SK-N-SH (cell line): ENCODE measurements at regions of chr2 and their contacts with region 1.

Region 1: DNA sequence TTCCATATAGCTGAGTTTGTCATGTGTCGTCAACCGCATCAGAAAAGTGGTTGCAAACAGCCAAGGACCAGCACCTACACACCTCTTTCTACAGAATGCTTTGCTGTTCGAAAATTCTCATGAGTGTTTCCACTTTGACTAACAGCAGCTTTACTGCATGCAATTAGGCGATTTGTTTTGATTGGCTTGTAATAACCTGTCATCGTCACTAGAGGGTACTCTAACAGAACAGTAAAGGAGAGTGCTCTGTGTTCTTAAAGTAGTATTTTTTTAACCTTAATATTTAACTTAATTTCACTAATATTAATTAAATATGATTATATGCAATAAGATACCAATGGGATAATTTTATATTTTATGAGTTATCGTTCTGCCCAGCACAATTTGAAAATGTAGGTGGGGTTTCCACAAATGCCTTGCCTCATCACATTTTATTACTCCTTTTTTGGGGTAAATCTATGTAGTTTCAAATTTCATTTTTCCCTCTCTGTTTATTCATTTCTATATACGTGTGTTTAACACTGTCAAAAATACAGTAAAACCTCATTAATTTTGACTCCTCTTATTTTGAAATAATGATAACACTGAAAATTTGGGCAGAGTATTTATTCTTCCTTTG is 502.2 kb downstream of the NRXN1 start:
- DNase-seq: peak; percentile 19
- H3K4me3 ChIP-seq: no peak overlapping the region; a peak in 1 of 4 replicates
- H3K27ac ChIP-seq: no peak overlapping the region
- H3K4me1 ChIP-seq: peaks cover 0 to 3% of the 10 kb centered on the region in 2 experiments; a peak in 2 of 4 replicates
- H3K27me3 ChIP-seq: no peaks in the 10 kb centered on the region
- CTCF ChIP-seq: peak; percentile 72
- EP300 ChIP-seq: no peak
- RAD21 ChIP-seq: peak; percentile 78

Region 2: DNA sequence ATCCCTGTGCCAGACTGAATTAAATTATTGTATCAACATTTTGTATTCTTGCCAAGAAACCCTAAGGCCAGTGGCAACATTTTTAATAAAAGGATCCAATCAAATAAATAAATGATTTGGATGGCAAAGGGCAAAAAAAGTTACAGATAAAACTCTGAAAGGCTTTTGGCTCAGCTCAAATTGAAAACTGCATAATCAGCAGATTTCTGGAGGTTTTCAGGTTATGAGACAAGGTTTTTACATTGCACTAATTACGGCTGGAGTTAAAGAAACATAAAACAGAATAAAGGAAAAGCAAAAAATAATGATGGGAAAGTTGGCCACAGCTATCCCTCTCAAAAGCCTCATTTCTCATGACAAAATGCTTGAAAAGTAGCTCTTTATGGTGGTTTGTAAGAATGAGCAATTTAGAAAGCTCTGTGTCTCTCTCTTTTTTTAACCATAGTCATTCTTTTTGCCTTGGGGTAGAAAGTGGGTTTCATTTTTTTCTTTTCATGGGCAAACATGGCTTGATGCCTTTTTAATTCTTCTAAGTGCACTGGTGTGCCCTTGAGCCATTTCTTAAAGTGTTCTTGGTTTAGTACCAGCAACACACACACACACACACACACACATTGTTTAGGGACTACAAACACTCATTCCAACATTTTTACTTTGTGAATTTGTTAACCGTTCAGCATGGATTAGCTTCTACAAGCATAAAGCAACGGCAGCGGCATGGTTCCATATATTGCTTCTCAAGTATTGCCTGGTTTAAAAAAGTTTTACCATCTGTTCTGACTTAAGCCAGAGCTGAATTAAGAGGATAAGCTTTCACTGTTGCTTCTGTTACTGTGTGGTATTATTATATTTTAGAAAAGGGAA is 628.3 kb before region 1 on chr2:
- CTCF ChIA-PET with region 1: no interaction called
- POLR2A ChIA-PET with region 1: no interaction called
- DNase-seq: no peak
- H3K4me3 ChIP-seq: no peak overlapping the region
- H3K27ac ChIP-seq: no peak overlapping the region
- H3K4me1 ChIP-seq: no peaks in the 10 kb centered on the region
- H3K27me3 ChIP-seq: no peaks in the 10 kb centered on the region
- CTCF ChIP-seq: no peak
- EP300 ChIP-seq: no peak
- RAD21 ChIP-seq: no peak

Region 3: GRCh38 chr2:51795248-51795888 is 1265.7 kb after region 1 on chr2:
- CTCF ChIA-PET with region 1: interaction called, 12 read pairs
- POLR2A ChIA-PET with region 1: no interaction called
- DNase-seq: peak; percentile 27
- H3K4me3 ChIP-seq: no peak overlapping the region
- H3K27ac ChIP-seq: no peak overlapping the region
- H3K4me1 ChIP-seq: no peaks in the 10 kb centered on the region
- H3K27me3 ChIP-seq: no peaks in the 10 kb centered on the region
- CTCF ChIP-seq: peak; percentile 43
- EP300 ChIP-seq: no peak
- RAD21 ChIP-seq: peak; percentile 51